SK-N-SH (cell line): ENCODE measurements at regions of chr11 and their contacts with region 1.

Region 1: DNA sequence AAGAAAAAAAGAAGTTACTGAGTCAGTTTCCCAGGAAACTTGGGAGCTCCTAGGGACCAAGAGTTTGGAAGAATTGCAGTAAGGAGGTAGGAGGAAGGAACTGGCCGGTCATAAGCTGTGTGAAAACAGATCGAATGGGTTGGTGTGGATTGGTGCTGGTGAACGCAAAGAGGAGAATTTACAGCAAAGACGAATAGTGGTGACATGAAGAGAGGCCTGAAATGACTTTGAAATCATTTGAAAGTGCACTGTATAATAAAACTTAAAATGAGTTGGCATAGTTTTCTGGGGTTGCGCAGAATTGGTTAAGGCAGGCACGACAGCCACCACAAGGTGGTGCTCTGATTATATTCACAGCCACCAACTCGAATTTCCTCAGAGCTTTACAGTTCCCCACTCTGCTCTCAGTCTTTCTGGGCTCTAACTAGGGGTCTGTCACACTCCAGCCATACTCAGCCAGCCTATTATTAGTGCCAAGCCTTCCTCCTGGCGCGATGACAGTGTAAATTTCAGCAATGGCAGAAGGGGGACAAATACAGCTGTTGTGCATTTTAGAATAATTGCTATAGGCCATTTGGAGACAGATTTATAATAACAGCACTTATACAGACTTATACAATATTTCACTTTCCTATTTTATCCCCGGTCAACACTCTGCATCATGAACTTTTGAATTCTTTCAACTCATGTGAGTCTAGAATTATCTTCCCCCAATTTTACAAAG is 8.3 kb upstream of the HTR3B start:
- DNase-seq: peak; percentile 61
- H3K4me3 ChIP-seq: peak overlapping the region in 1 of 2 experiments; percentile 19; a peak in 1 of 4 replicates
- H3K27ac ChIP-seq: no peak overlapping the region
- H3K4me1 ChIP-seq: no peaks in the 10 kb centered on the region
- H3K27me3 ChIP-seq: no peaks in the 10 kb centered on the region; the same call in 1 of the 2 replicates
- CTCF ChIP-seq: peak; percentile 76
- EP300 ChIP-seq: no peak
- RAD21 ChIP-seq: peak; percentile 80

Region 2: DNA sequence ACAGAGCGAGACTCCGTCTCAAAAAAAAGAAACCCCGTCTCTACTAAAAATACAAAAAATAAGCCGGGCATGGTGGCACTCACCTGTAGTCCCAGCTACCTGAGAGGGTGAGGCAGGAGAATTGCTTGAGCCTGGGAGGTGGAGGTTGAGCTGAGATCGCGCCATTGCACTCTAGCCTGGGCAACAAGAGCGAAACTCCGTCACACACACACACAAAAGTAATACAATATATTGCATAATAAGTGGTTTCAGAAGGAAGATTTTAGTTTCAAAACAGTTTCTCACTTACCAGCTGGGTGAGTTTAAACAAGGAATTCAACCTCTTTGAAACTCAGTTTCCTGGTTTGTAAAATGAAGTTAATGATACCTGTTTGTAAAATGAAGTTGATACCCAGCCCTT is 45.9 kb after region 1 on chr11:
- CTCF ChIA-PET with region 1: interaction called, 14 read pairs
- POLR2A ChIA-PET with region 1: no interaction called
- DNase-seq: no peak
- H3K4me3 ChIP-seq: no peak overlapping the region
- H3K27ac ChIP-seq: no peak overlapping the region
- H3K4me1 ChIP-seq: no peaks in the 10 kb centered on the region
- H3K27me3 ChIP-seq: no peaks in the 10 kb centered on the region
- CTCF ChIP-seq: no peak
- EP300 ChIP-seq: no peak
- RAD21 ChIP-seq: no peak

Region 3: GRCh38 chr11:113974741-113975470 is 78.6 kb after region 1 on chr11 and contains the start of gene HTR3A:
- CTCF ChIA-PET with region 1: interaction called, 16 read pairs
- POLR2A ChIA-PET with region 1: no interaction called
- DNase-seq: peak; percentile 43
- H3K4me3 ChIP-seq: no peak within 1 kb of the TSS
- H3K27ac ChIP-seq: no peak within 1 kb of the TSS
- H3K4me1 ChIP-seq: peaks cover 0 to 16% of the 10 kb centered on the region in 2 experiments; a peak in 1 of 4 replicates
- H3K27me3 ChIP-seq: no peaks in the 10 kb centered on the region; the same call in 1 of the 2 replicates
- CTCF ChIP-seq: no peak
- EP300 ChIP-seq: no peak
- RAD21 ChIP-seq: no peak
- polyA plus RNA-seq, gene HTR3A: not detected in 2 replicates

Region 4: GRCh38 chr11:114001416-114001815 is 105.1 kb after region 1 on chr11:
- CTCF ChIA-PET with region 1: interaction called, 56 read pairs
- POLR2A ChIA-PET with region 1: no interaction called
- DNase-seq: no peak
- H3K4me3 ChIP-seq: no peak overlapping the region
- H3K27ac ChIP-seq: no peak overlapping the region
- H3K4me1 ChIP-seq: no peaks in the 10 kb centered on the region
- H3K27me3 ChIP-seq: no peaks in the 10 kb centered on the region
- CTCF ChIP-seq: no peak
- EP300 ChIP-seq: no peak
- RAD21 ChIP-seq: no peak

Region 5: DNA sequence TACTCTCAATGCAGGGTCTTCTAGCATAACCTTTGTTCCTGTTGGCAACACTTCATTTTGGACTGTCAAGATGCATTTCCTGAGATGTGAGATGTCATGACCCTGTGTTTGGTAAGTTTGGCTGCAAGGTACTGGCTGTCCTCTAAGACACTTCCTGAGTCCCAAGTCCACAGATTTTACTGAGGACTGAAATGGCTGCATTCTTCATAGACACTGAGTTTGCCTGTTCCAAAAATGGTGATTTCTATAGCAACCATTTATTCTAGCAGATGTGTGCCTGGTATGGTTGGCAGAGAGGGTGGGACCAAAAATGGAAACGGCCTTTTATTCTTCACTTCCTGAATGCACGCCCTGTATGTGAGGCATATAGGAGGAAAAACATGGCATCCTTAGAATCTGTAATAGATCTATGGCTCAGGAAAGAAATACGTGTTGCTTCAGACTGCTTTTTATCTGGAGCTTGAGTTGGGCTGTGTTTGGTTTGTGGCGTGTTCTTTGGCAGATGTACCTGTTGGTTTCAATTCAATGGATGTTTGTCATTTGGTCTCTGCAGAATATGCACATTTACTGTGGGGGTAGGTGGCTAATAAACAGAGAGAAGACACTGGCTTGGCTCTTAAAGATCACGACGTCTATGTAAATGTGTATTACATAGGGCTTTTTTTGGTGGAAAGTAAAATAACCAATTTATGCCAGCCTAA is 225.6 kb after region 1 on chr11:
- CTCF ChIA-PET with region 1: no interaction called
- POLR2A ChIA-PET with region 1: no interaction called
- DNase-seq: no peak
- H3K4me3 ChIP-seq: no peak overlapping the region
- H3K27ac ChIP-seq: no peak overlapping the region
- H3K4me1 ChIP-seq: no peaks in the 10 kb centered on the region
- H3K27me3 ChIP-seq: peaks cover under 1% of the 10 kb centered on the region; the same call in 1 of the 2 replicates
- CTCF ChIP-seq: no peak
- EP300 ChIP-seq: no peak
- RAD21 ChIP-seq: no peak

Region 6: GRCh38 chr11:114180301-114181055 is 284.2 kb after region 1 on chr11:
- CTCF ChIA-PET with region 1: interaction called, 12 read pairs
- POLR2A ChIA-PET with region 1: no interaction called
- DNase-seq: peak; percentile 61
- H3K4me3 ChIP-seq: no peak overlapping the region
- H3K27ac ChIP-seq: no peak overlapping the region
- H3K4me1 ChIP-seq: no peaks in the 10 kb centered on the region
- H3K27me3 ChIP-seq: peaks cover 6% of the 10 kb centered on the region; the same call in 1 of the 2 replicates
- CTCF ChIP-seq: peak; percentile 43
- EP300 ChIP-seq: no peak
- RAD21 ChIP-seq: peak; percentile 73